Activated T-helper 2 cell treated with anti-CD3 and anti-CD28 coated beads, Interferon-gamma antibody, Interleukin-2, Interleukin-4, amounts not matched to agents 10 μg/mL and 5 μg/mL and 100 μg/mL, durations not matched to agents 14 hours and 24 hours and 36 hours (primary cell): ENCODE measurements at regions of chr2 and their contacts with region 1.

Region 1: DNA sequence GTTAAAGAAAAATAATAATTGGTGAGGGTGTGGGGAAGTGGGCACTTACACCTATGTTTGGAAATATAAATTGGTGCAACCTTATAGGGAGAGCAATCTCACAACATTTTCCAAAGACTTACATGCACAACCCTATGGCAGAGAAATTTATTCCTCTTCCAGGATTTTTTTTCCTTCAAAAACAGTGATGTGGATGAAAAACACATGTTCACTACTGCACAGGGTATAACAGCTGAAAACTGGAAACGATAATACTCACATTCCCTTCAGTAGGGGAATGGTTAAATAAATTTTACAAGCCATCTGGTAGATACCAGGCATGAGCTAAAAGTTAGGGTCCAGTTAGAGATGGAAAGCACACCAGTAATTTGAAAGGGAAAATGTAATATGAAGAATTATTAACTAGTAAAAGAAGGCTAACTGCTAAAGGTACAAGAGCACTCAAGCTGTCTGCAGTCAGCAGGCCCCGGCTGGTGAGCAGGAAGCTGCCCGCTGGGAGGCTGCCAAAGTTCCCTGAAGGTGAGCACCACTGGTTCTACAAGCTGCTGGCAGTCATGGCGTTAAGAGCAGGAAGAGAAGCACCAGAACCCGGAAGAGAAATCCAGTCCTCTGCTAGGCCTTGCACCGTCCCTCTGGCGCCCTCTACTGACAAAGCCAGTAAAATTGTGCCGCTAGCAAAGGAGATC is 28.4 kb upstream of the CASP8 start:
- DNase-seq: peak; percentile 88
- H3K4me3 Mint-ChIP-seq: peak overlapping the region; percentile 54
- H3K27ac Mint-ChIP-seq: peak overlapping the region; percentile 88
- H3K4me1 Mint-ChIP-seq: peaks cover 43% of the 10 kb centered on the region
- H3K27me3 Mint-ChIP-seq: no peaks in the 10 kb centered on the region

Region 2: GRCh38 chr2:200901459-200902072 is 330.4 kb before region 1 on chr2:
- intact Hi-C with region 1: loop called (anchors 1 kb)
- DNase-seq: peak; percentile 69
- H3K4me3 Mint-ChIP-seq: no peak overlapping the region
- H3K27ac Mint-ChIP-seq: peak overlapping the region; percentile 76
- H3K4me1 Mint-ChIP-seq: peaks cover 13% of the 10 kb centered on the region
- H3K27me3 Mint-ChIP-seq: no peaks in the 10 kb centered on the region

Region 3: GRCh38 chr2:201100497-201100896 is 131.4 kb before region 1 on chr2:
- intact Hi-C with region 1: no loop called
- DNase-seq: no peak
- H3K4me3 Mint-ChIP-seq: no peak overlapping the region
- H3K27ac Mint-ChIP-seq: no peak overlapping the region
- H3K4me1 Mint-ChIP-seq: no peaks in the 10 kb centered on the region
- H3K27me3 Mint-ChIP-seq: no peaks in the 10 kb centered on the region

Region 4: GRCh38 chr2:201182650-201183364 is 49.1 kb before region 1 on chr2 and contains the start of gene CASP10:
- intact Hi-C with region 1: loop called (anchors 1 kb)
- DNase-seq: peak; percentile 32
- H3K4me3 Mint-ChIP-seq: peak within 1 kb of the TSS; percentile 96
- H3K27ac Mint-ChIP-seq: peak within 1 kb of the TSS; percentile 93
- H3K4me1 Mint-ChIP-seq: peaks cover 43% of the 10 kb centered on the region
- H3K27me3 Mint-ChIP-seq: no peaks in the 10 kb centered on the region
- total RNA-seq, gene CASP10: 14.3 and 17.3 TPM in 2 replicates

Region 5: GRCh38 chr2:201203916-201204654 is 27.8 kb before region 1 on chr2:
- intact Hi-C with region 1: no loop called
- DNase-seq: no peak
- H3K4me3 Mint-ChIP-seq: no peak overlapping the region
- H3K27ac Mint-ChIP-seq: no peak overlapping the region
- H3K4me1 Mint-ChIP-seq: peaks cover 6% of the 10 kb centered on the region
- H3K27me3 Mint-ChIP-seq: no peaks in the 10 kb centered on the region

Region 6: GRCh38 chr2:201257956-201258665 is 26.2 kb after region 1 on chr2:
- intact Hi-C with region 1: loop called (anchors 1 kb)
- DNase-seq: peak; percentile 94
- H3K4me3 Mint-ChIP-seq: peak overlapping the region; percentile 89
- H3K27ac Mint-ChIP-seq: peak overlapping the region; percentile 97
- H3K4me1 Mint-ChIP-seq: peaks cover 69% of the 10 kb centered on the region
- H3K27me3 Mint-ChIP-seq: no peaks in the 10 kb centered on the region

Region 7: GRCh38 chr2:201451292-201452057 is 219.6 kb after region 1 on chr2 and contains the starts of genes STRADB and TRAK2:
- intact Hi-C with region 1: loop called (anchors 1 kb)
- DNase-seq: peak; percentile 95
- H3K4me3 Mint-ChIP-seq: peak within 1 kb of the TSS; percentile 92
- H3K27ac Mint-ChIP-seq: peak within 1 kb of the TSS; percentile 91
- H3K4me1 Mint-ChIP-seq: peaks cover 46% of the 10 kb centered on the region
- H3K27me3 Mint-ChIP-seq: peaks cover 8% of the 10 kb centered on the region
- total RNA-seq, gene STRADB: 20.7 and 23.1 TPM in 2 replicates
- total RNA-seq, gene TRAK2: 27.1 and 27.7 TPM in 2 replicates

Region 8: DNA sequence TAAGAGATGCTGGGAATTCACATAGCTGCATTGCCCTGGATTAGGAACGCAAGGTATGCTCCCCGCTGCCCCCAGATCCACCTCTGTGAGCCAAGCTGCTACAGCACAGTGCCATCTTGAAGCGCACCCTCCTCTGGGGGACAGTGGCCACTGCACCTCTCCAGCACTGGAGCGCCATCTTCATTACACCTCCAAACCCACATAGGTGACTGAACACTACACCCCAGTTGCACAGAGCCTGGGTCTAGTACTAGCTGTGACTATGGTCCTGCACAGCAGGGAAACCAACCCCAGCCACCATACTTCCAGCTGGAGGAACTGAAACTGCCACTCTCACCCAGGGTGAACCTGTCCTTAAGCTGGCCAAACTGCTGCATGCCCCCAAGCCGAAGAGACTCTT is 326.7 kb after region 1 on chr2:
- intact Hi-C with region 1: no loop called
- DNase-seq: no peak
- H3K4me3 Mint-ChIP-seq: no peak overlapping the region
- H3K27ac Mint-ChIP-seq: no peak overlapping the region
- H3K4me1 Mint-ChIP-seq: no peaks in the 10 kb centered on the region
- H3K27me3 Mint-ChIP-seq: no peaks in the 10 kb centered on the region

Region 9: DNA sequence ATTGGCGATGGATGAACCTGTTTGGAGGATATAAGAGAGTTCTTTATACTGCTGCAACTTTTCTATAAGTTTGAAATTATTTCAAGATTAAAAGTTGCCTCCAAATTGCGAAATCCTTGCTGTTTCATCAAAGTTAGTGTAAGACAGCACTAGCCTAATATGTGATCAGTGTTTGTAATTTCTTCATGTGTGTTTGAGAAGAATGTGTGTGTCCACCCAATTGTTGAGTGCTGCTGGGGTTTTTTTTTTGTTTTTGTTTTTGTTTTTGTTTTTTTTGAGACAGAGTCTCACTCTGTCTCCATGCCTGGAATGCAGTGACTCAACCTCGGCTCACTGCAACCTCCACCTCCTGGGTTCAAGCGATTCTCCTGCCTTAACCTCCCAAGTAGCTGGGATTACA is 607.8 kb after region 1 on chr2:
- intact Hi-C with region 1: no loop called
- DNase-seq: no peak
- H3K4me3 Mint-ChIP-seq: no peak overlapping the region
- H3K27ac Mint-ChIP-seq: no peak overlapping the region
- H3K4me1 Mint-ChIP-seq: no peaks in the 10 kb centered on the region
- H3K27me3 Mint-ChIP-seq: peaks cover 8% of the 10 kb centered on the region

Region 10: DNA sequence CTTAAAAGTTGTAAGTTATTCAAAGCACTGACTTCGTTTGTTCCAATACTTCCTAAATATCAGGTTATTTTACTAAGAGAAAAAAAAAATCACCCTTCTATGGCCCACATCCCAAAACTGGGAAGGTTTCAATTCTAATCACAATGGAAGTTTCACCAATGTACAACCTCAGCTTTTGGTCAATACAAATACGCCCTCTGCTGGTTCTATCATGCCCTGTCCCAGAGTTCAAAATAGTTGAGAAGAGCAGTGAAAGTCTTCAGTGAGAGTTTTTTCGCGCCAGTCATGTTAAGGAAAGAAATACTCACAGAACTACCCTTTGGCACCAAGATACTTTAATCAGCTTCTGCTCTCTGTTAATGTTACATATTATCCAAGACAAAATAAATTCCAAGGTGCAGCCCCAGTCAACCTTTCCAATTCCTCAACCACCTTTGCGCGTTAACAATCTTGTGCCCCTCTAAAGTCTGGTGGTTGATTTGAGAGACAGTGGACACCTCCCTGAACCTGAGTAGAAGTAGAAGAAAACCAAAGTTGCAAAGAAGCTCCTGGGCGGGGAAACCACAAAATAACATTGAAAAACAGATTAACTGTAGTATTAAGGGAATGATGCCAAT is 946.5 kb after region 1 on chr2:
- intact Hi-C with region 1: loop called (anchors 10 kb)
- DNase-seq: peak; percentile 16
- H3K4me3 Mint-ChIP-seq: no peak overlapping the region
- H3K27ac Mint-ChIP-seq: no peak overlapping the region
- H3K4me1 Mint-ChIP-seq: peaks cover 5% of the 10 kb centered on the region
- H3K27me3 Mint-ChIP-seq: peaks cover 8% of the 10 kb centered on the region